ENCODE measurements at regions of chr6 and their contacts with region 1.

Region 1: GRCh38 chr6:20126789-20127653 is 85.2 kb downstream of the MBOAT1 start:
- DNase-seq: peak; percentile 17 to 88 (median 71)

Region 2: GRCh38 chr6:20092071-20092566 is 34.9 kb before region 1 on chr6:
- intact Hi-C with region 1: loop called (anchors 5 kb)
- DNase-seq: peak in 3 of 42 donors; percentile 10 to 62 (median 35)

Region 3: DNA sequence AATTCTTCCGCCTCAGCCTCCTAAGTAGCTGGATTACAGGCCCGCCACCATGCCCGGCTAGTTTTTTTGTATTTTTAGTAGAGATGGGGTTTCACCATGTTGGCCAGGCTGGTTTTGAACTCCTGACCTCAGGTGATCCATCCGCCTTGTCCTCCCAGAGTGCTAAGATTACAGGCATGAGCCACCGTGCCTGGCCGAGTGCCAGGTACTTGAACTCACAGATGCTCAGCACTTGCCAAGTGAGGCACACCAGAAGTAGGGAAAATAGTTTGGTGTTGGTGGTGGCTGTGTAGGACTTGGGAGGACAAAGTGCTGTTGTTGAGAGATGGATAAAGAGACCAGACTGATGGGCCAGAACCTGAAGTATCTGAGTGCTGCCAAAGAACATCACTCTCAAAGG is 125.3 kb after region 1 on chr6:
- intact Hi-C with region 1: no loop called
- DNase-seq: no peak